CD8-positive, alpha-beta T cell (primary cell): ENCODE measurements at regions of chr17 and their contacts with region 1.

Region 1: GRCh38 chr17:44775136-44775837 is 16.5 kb downstream of the ADAM11 start:
- DNase-seq: peak in 8 of 9 experiments; percentile 92 to 99 (median 98)
- ATAC-seq: peak; percentile 92
- H3K4me3 ChIP-seq: peak overlapping the region; percentile 68 to 97
- H3K4me3 Mint-ChIP-seq: peak overlapping the region; percentile 91
- H3K27ac ChIP-seq: peak overlapping the region in 1 of 2 experiments; percentile 11
- H3K27ac Mint-ChIP-seq: peak overlapping the region; percentile 60
- H3K4me1 ChIP-seq: peaks cover 17% of the 10 kb centered on the region
- H3K4me1 Mint-ChIP-seq: peaks cover 16% of the 10 kb centered on the region
- H3K27me3 ChIP-seq: peaks cover 0 to 10% of the 10 kb centered on the region in 2 experiments
- H3K27me3 Mint-ChIP-seq: peaks cover 7% of the 10 kb centered on the region
- CTCF ChIP-seq: peak; percentile 61

Region 2: GRCh38 chr17:43907425-43907981 is 867.8 kb before region 1 on chr17 and contains the start of gene MPP2:
- CTCF ChIA-PET with region 1: no interaction called
- POLR2A ChIA-PET with region 1: no interaction called
- intact Hi-C with region 1: loop called in 1 of 2 experiments (anchors 2 kb)
- DNase-seq: peak; percentile 34 to 77 (median 61)
- ATAC-seq: peak; percentile 50
- H3K4me3 ChIP-seq: peak within 1 kb of the TSS; percentile 67 to 72
- H3K4me3 Mint-ChIP-seq: peak within 1 kb of the TSS; percentile 94
- H3K27ac ChIP-seq: peak within 1 kb of the TSS; percentile 31 to 65
- H3K27ac Mint-ChIP-seq: peak within 1 kb of the TSS; percentile 94
- H3K4me1 ChIP-seq: peaks cover 20% of the 10 kb centered on the region
- H3K4me1 Mint-ChIP-seq: peaks cover 13% of the 10 kb centered on the region
- H3K27me3 ChIP-seq: peaks cover 0 to 20% of the 10 kb centered on the region in 2 experiments
- H3K27me3 Mint-ChIP-seq: peaks cover 9% of the 10 kb centered on the region
- CTCF ChIP-seq: no peak
- total RNA-seq, gene MPP2: 9.6 to 11.8 TPM

Region 3: DNA sequence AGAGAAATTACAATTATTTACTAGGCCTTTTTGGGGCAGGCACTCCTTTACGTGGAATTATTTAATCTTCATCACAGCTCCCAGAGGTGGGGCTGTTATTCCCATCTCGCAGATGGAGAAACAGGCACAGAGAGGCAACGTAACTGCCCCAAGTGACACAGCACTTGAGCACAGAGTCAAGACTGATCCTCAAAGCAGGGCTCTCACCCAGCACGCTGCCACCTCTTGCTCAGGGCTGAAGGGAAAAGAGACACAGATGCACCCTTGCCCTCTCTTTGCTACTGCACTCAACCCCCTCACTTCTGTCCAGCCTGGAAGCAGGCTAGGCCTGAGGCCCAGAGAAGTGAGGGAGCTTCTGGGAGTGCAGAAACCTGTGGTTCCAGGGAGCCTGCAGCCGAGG is 12.1 kb before region 1 on chr17:
- CTCF ChIA-PET with region 1: interaction called, 13 read pairs
- POLR2A ChIA-PET with region 1: no interaction called
- intact Hi-C with region 1: no loop called
- DNase-seq: no peak
- ATAC-seq: no peak
- H3K4me3 ChIP-seq: no peak overlapping the region
- H3K4me3 Mint-ChIP-seq: no peak overlapping the region
- H3K27ac ChIP-seq: no peak overlapping the region
- H3K27ac Mint-ChIP-seq: no peak overlapping the region
- H3K4me1 ChIP-seq: peaks cover 7% of the 10 kb centered on the region
- H3K4me1 Mint-ChIP-seq: peaks cover 1% of the 10 kb centered on the region
- H3K27me3 ChIP-seq: peaks cover 12 to 13% of the 10 kb centered on the region in 2 experiments
- H3K27me3 Mint-ChIP-seq: peaks cover 42% of the 10 kb centered on the region
- CTCF ChIP-seq: no peak

Region 4: GRCh38 chr17:44899069-44899782 is 123.9 kb after region 1 on chr17 and contains the start of gene EFTUD2:
- CTCF ChIA-PET with region 1: interaction called, 6 read pairs
- POLR2A ChIA-PET with region 1: interaction called, 4 read pairs
- intact Hi-C with region 1: loop called (anchors 1 kb)
- DNase-seq: peak; percentile 88 to 98 (median 93)
- ATAC-seq: peak; percentile 95
- H3K4me3 ChIP-seq: peak within 1 kb of the TSS; percentile 71 to 84
- H3K4me3 Mint-ChIP-seq: peak within 1 kb of the TSS; percentile 97
- H3K27ac ChIP-seq: peak within 1 kb of the TSS; percentile 96 to 98
- H3K27ac Mint-ChIP-seq: peak within 1 kb of the TSS; percentile 100
- H3K4me1 ChIP-seq: peaks cover 18% of the 10 kb centered on the region
- H3K4me1 Mint-ChIP-seq: peaks cover 29% of the 10 kb centered on the region
- H3K27me3 ChIP-seq: no peaks in the 10 kb centered on the region
- H3K27me3 Mint-ChIP-seq: no peaks in the 10 kb centered on the region
- CTCF ChIP-seq: no peak
- total RNA-seq, gene EFTUD2: 131 to 133 TPM

Region 5: GRCh38 chr17:45021607-45022287 is 246.5 kb after region 1 on chr17:
- CTCF ChIA-PET with region 1: interaction called, 33 read pairs
- POLR2A ChIA-PET with region 1: no interaction called
- intact Hi-C with region 1: loop called (anchors 1 kb)
- DNase-seq: peak; percentile 35 to 82 (median 61)
- ATAC-seq: peak; percentile 87
- H3K4me3 ChIP-seq: peak overlapping the region; percentile 40 to 42
- H3K4me3 Mint-ChIP-seq: peak overlapping the region; percentile 59
- H3K27ac ChIP-seq: no peak overlapping the region
- H3K27ac Mint-ChIP-seq: no peak overlapping the region
- H3K4me1 ChIP-seq: peaks cover 20% of the 10 kb centered on the region
- H3K4me1 Mint-ChIP-seq: peaks cover 21% of the 10 kb centered on the region
- H3K27me3 ChIP-seq: peaks cover 20 to 21% of the 10 kb centered on the region in 2 experiments
- H3K27me3 Mint-ChIP-seq: peaks cover 37% of the 10 kb centered on the region
- CTCF ChIP-seq: peak; percentile 90

Region 6: DNA sequence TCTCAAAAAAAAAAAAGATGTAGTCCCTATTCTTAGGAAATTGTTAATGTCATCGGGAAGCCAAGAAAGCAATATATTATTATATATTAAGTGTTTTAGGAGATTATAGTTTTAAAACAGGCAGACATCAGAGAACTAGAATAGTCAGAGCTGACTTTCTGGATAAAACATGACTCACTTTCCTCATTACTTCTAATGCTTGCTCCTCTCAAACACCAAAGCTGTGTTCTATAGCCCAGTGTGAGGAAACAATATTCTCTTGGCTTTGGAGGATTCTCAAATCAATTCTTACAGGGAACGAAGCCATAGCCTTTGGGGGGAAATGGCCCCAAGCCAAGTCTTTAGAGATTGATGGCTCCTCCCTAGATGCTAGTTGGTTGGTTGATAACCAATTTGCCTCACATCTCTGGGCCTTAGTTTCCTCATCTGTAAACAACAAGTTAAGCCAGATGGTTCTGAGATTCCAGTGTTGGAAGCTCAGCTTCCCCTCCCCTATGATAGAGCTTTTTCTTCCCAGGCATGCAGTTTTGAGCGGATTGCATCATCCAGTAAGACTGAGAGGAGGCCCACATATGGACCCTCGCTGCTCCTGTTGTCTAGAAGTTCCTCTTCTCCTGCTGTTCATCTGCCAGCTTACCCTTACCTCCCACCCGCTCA is 298.3 kb after region 1 on chr17:
- CTCF ChIA-PET with region 1: no interaction called
- POLR2A ChIA-PET with region 1: no interaction called
- intact Hi-C with region 1: no loop called
- DNase-seq: no peak
- ATAC-seq: no peak
- H3K4me3 ChIP-seq: no peak overlapping the region
- H3K4me3 Mint-ChIP-seq: no peak overlapping the region
- H3K27ac ChIP-seq: no peak overlapping the region
- H3K27ac Mint-ChIP-seq: no peak overlapping the region
- H3K4me1 ChIP-seq: no peaks in the 10 kb centered on the region
- H3K4me1 Mint-ChIP-seq: peaks cover 33% of the 10 kb centered on the region
- H3K27me3 ChIP-seq: no peaks in the 10 kb centered on the region
- H3K27me3 Mint-ChIP-seq: no peaks in the 10 kb centered on the region
- CTCF ChIP-seq: no peak

Region 7: GRCh38 chr17:45135192-45135977 is 360.1 kb after region 1 on chr17 and contains the start of gene ACBD4:
- CTCF ChIA-PET with region 1: interaction called, 4 read pairs
- POLR2A ChIA-PET with region 1: no interaction called
- intact Hi-C with region 1: loop called (anchors 1 kb)
- DNase-seq: peak; percentile 95 to 99 (median 98)
- ATAC-seq: peak; percentile 86
- H3K4me3 ChIP-seq: peak within 1 kb of the TSS; percentile 92 to 98
- H3K4me3 Mint-ChIP-seq: peak within 1 kb of the TSS; percentile 90
- H3K27ac ChIP-seq: peak within 1 kb of the TSS; percentile 62 to 78
- H3K27ac Mint-ChIP-seq: peak within 1 kb of the TSS; percentile 84
- H3K4me1 ChIP-seq: peaks cover 12% of the 10 kb centered on the region
- H3K4me1 Mint-ChIP-seq: peaks cover 28% of the 10 kb centered on the region
- H3K27me3 ChIP-seq: no peaks in the 10 kb centered on the region
- H3K27me3 Mint-ChIP-seq: peaks cover 2% of the 10 kb centered on the region
- CTCF ChIP-seq: peak; percentile 100
- total RNA-seq, gene ACBD4: 15.5 to 19.3 TPM

Region 8: GRCh38 chr17:45317112-45317928 is 542.0 kb after region 1 on chr17:
- CTCF ChIA-PET with region 1: no interaction called
- POLR2A ChIA-PET with region 1: no interaction called
- intact Hi-C with region 1: loop called in 1 of 2 experiments (anchors 5 kb)
- DNase-seq: peak; percentile 99 to 100 (median 100)
- ATAC-seq: peak; percentile 81
- H3K4me3 ChIP-seq: peak overlapping the region; percentile 55 to 81
- H3K4me3 Mint-ChIP-seq: peak overlapping the region; percentile 95
- H3K27ac ChIP-seq: peak overlapping the region; percentile 75 to 81
- H3K27ac Mint-ChIP-seq: peak overlapping the region; percentile 94
- H3K4me1 ChIP-seq: peaks cover 78% of the 10 kb centered on the region
- H3K4me1 Mint-ChIP-seq: peaks cover 80% of the 10 kb centered on the region
- H3K27me3 ChIP-seq: no peaks in the 10 kb centered on the region
- H3K27me3 Mint-ChIP-seq: no peaks in the 10 kb centered on the region
- CTCF ChIP-seq: no peak